ENCODE measurements at regions of chr17 and their contacts with region 1.

Region 1: GRCh38 chr17:62923258-62924150 is 42.5 kb upstream of the TANC2 start:
- DNase-seq: no peak
- ATAC-seq: peak; percentile 36 to 45; a peak in 4 of 6 replicates
- H3K4me3 ChIP-seq: no peak overlapping the region
- H3K27ac ChIP-seq: peak overlapping the region in 1 of 2 experiments; percentile 25; a peak in 2 of 6 replicates
- H3K4me1 ChIP-seq: peaks cover 11% of the 10 kb centered on the region; the same call in 2 of the 3 replicates
- CTCF ChIP-seq: no peak
- EP300 ChIP-seq: no peak
- POLR2A ChIP-seq: no peak
- RAD21 ChIP-seq: no peak

Region 2: GRCh38 chr17:62935098-62935497 is 11.6 kb after region 1 on chr17:
- CTCF ChIA-PET with region 1: interaction called, 10 read pairs
- POLR2A ChIA-PET with region 1: no interaction called
- DNase-seq: no peak
- ATAC-seq: no peak
- H3K4me3 ChIP-seq: no peak overlapping the region
- H3K27ac ChIP-seq: no peak overlapping the region
- H3K4me1 ChIP-seq: no peaks in the 10 kb centered on the region
- CTCF ChIP-seq: no peak
- EP300 ChIP-seq: no peak
- POLR2A ChIP-seq: no peak
- RAD21 ChIP-seq: no peak

Region 3: GRCh38 chr17:62995377-62995885 is 71.9 kb after region 1 on chr17:
- CTCF ChIA-PET with region 1: no interaction called
- POLR2A ChIA-PET with region 1: no interaction called
- DNase-seq: peak; percentile 40 to 58
- ATAC-seq: peak; percentile 90 to 91
- H3K4me3 ChIP-seq: no peak overlapping the region
- H3K27ac ChIP-seq: no peak overlapping the region
- H3K4me1 ChIP-seq: peaks cover 30% of the 10 kb centered on the region
- CTCF ChIP-seq: peak; percentile 67
- EP300 ChIP-seq: no peak
- POLR2A ChIP-seq: no peak
- RAD21 ChIP-seq: peak; percentile 70 to 83